Heart right ventricle (tissue), 16 donors: ENCODE measurements at regions of chr11 and their contacts with region 1.

Region 1: GRCh38 chr11:46845740-46846509 is at the start of gene CKAP5:
- DNase-seq: peak; percentile 89 to 91
- ATAC-seq: peak; percentile 97 to 100 (median 99)
- H3K4me3 ChIP-seq: peak within 1 kb of the TSS; percentile 58 to 96 (median 86)
- H3K27ac ChIP-seq: peak within 1 kb of the TSS in 9 of 10 donors; percentile 64 to 90 (median 81)
- H3K4me1 ChIP-seq: peaks cover 6 to 26% (median 17%) of the 10 kb centered on the region in 9 donors
- H3K27me3 ChIP-seq: no peaks in the 10 kb centered on the region
- CTCF ChIP-seq: no peak
- total RNA-seq, gene CKAP5: 67.7 to 114 (median 82.7) TPM

Region 2: GRCh38 chr11:46826310-46827044 is 19.4 kb before region 1 on chr11:
- intact Hi-C with region 1: loop called in 4 of 10 experiments (anchors 1 to 2 kb)
- DNase-seq: peak; percentile 84 to 85
- ATAC-seq: peak; percentile 99
- H3K4me3 ChIP-seq: peak overlapping the region; percentile 19 to 81 (median 66)
- H3K27ac ChIP-seq: peak overlapping the region in 9 of 10 donors; percentile 64 to 87 (median 78)
- H3K4me1 ChIP-seq: peaks cover 0 to 54% (median 40%) of the 10 kb centered on the region in 9 donors
- H3K27me3 ChIP-seq: no peaks in the 10 kb centered on the region
- CTCF ChIP-seq: peak in 4 of 9 donors; percentile 31 to 46 (median 38)